ENCODE measurements at regions of chr19 and their contacts with region 1.

Region 1: GRCh38 chr19:40777937-40778705 is at the start of gene RAB4B:
- DNase-seq: peak; percentile 99
- H3K4me3 ChIP-seq: peak within 1 kb of the TSS; percentile 57 to 89 (median 60)
- H3K27ac ChIP-seq: peak within 1 kb of the TSS; percentile 99
- H3K4me1 ChIP-seq: peaks cover 27% of the 10 kb centered on the region
- H3K27me3 ChIP-seq: no peaks in the 10 kb centered on the region
- CTCF ChIP-seq: no peak
- total RNA-seq, gene RAB4B: 9.0 to 23.5 TPM

Region 2: GRCh38 chr19:40705362-40705651 is 72.8 kb before region 1 on chr19:
- CTCF ChIA-PET with region 1: no interaction called
- dilution Hi-C with region 1: loop called (anchors 5 kb)
- in situ Hi-C with region 1: no loop called
- intact Hi-C with region 1: no loop called
- DNase-seq: no peak
- H3K4me3 ChIP-seq: no peak overlapping the region
- H3K27ac ChIP-seq: no peak overlapping the region
- H3K4me1 ChIP-seq: no peaks in the 10 kb centered on the region
- H3K27me3 ChIP-seq: no peaks in the 10 kb centered on the region
- CTCF ChIP-seq: no peak

Region 3: GRCh38 chr19:40735003-40735771 is 42.9 kb before region 1 on chr19:
- CTCF ChIA-PET with region 1: no interaction called
- dilution Hi-C with region 1: loop called (anchors 5 kb)
- in situ Hi-C with region 1: no loop called
- intact Hi-C with region 1: no loop called
- DNase-seq: no peak
- H3K4me3 ChIP-seq: no peak overlapping the region
- H3K27ac ChIP-seq: no peak overlapping the region
- H3K4me1 ChIP-seq: no peaks in the 10 kb centered on the region
- H3K27me3 ChIP-seq: no peaks in the 10 kb centered on the region
- CTCF ChIP-seq: no peak

Region 4: DNA sequence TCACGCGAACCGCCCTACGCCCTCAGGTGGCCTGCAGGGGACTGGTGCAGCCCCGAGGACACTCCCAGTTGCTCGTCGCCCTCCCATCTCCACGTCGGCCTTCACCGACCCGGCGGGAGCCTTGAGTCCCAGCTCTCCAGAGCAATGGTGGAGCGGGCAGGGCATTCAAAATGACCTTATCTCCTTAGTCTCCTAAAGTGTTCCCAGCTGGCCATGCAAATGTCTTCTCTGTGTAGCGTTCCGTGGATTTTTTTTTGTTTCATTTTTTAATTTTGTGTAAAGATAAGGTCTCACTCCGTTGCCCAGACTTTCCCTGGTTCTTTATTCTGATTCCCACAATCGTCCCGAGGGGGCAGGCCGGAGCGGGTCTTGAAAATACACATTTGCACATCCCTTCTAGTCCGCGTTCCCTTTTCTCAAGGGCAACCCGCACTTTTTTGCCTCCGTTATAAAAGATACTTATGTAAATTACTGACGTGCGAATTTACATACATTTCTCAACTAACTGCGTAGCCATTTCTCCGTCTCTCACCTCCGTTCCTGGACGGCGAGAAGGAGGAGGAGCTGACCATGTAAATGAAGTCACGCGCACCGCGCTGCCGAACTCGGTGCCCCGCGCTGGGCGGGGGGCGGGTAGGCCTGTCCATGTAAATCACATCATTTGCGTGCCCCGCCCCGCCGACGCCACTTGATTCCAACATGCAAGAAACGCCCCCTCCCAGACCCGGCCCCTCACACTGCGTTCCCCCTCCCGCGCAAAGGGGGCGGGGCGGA is 20.3 kb after region 1 on chr19:
- CTCF ChIA-PET with region 1: interaction called, 5 read pairs
- dilution Hi-C with region 1: no loop called
- in situ Hi-C with region 1: no loop called
- intact Hi-C with region 1: loop called (anchors 1 kb)
- DNase-seq: peak; percentile 99
- H3K4me3 ChIP-seq: peak overlapping the region; percentile 50 to 57 (median 54)
- H3K27ac ChIP-seq: peak overlapping the region; percentile 82
- H3K4me1 ChIP-seq: peaks cover 42% of the 10 kb centered on the region
- H3K27me3 ChIP-seq: no peaks in the 10 kb centered on the region
- CTCF ChIP-seq: peak; percentile 23 to 38

Region 5: DNA sequence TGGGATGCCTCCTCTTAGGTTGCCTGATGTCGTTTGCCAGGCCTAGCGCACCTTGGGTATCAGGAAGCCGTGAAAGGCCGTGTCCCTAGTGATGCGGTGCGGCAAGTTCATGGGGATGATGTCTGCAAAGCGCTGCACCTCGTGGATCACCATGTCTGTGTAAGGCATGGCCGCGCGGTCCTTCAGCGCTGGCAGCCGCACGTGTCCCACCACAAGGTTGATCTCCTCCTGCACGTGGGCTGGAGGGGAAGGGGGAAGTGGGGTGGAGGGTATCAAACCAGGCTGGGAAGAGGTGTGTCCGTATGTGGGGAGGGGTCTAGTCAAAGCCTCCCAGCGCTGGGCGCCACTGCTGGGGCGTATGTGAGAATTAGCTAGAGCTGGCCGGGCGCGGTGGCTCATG is 44.0 kb after region 1 on chr19:
- CTCF ChIA-PET with region 1: no interaction called
- dilution Hi-C with region 1: no loop called
- in situ Hi-C with region 1: no loop called
- intact Hi-C with region 1: no loop called
- DNase-seq: no peak
- H3K4me3 ChIP-seq: no peak overlapping the region
- H3K27ac ChIP-seq: no peak overlapping the region
- H3K4me1 ChIP-seq: no peaks in the 10 kb centered on the region
- H3K27me3 ChIP-seq: no peaks in the 10 kb centered on the region
- CTCF ChIP-seq: no peak

Measured in mammary epithelial cell (primary cell).